Psoas muscle (tissue), 8 donors: ENCODE measurements at regions of chr14 and their contacts with region 1.

Region 1: DNA sequence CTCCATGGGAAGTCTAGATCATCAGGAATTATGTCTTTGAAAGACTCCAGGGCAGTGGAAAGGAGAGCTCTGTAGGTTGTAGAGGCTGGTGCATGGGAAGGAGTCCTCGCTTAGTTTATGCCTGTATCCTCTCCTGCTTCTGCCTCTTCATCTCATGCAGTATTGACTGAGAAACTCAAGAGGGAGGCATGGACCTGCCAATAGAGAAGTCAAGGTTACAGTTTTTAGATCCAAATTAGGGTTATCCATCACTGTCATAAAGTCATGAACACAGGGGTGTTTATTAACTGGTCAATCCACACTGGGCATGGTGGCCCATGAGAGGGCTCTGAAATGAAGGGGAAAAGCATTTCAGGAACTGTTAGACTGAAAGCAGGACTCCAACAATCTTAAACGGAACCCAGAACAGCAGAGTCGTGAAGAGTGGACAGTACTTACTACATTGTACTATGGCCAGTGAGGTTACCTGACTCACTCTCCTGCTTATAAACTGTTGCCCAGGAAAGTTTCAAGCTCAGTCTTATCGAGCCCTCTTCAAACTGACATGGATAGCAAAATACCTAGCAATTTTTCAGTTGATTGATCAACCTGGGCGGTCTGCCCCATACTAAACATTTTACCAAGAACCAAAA is 30.1 kb upstream of the DHRS7 start:
- DNase-seq: no peak
- ATAC-seq: peak; percentile 75 to 89 (median 84)
- H3K4me3 ChIP-seq: no peak overlapping the region
- H3K27ac ChIP-seq: no peak overlapping the region
- H3K4me1 ChIP-seq: no peaks in the 10 kb centered on the region
- H3K27me3 ChIP-seq: no peaks in the 10 kb centered on the region
- CTCF ChIP-seq: peak; percentile 39

Region 2: GRCh38 chr14:60327447-60328331 is 132.4 kb after region 1 on chr14:
- intact Hi-C with region 1: loop called in 1 of 2 experiments (anchors 10 kb)
- DNase-seq: peak; percentile 50 to 85
- ATAC-seq: peak; percentile 90 to 93 (median 92)
- H3K4me3 ChIP-seq: peak overlapping the region; percentile 53
- H3K27ac ChIP-seq: peak overlapping the region; percentile 64
- H3K4me1 ChIP-seq: peaks cover 3% of the 10 kb centered on the region
- H3K27me3 ChIP-seq: no peaks in the 10 kb centered on the region
- CTCF ChIP-seq: peak; percentile 21

Region 3: DNA sequence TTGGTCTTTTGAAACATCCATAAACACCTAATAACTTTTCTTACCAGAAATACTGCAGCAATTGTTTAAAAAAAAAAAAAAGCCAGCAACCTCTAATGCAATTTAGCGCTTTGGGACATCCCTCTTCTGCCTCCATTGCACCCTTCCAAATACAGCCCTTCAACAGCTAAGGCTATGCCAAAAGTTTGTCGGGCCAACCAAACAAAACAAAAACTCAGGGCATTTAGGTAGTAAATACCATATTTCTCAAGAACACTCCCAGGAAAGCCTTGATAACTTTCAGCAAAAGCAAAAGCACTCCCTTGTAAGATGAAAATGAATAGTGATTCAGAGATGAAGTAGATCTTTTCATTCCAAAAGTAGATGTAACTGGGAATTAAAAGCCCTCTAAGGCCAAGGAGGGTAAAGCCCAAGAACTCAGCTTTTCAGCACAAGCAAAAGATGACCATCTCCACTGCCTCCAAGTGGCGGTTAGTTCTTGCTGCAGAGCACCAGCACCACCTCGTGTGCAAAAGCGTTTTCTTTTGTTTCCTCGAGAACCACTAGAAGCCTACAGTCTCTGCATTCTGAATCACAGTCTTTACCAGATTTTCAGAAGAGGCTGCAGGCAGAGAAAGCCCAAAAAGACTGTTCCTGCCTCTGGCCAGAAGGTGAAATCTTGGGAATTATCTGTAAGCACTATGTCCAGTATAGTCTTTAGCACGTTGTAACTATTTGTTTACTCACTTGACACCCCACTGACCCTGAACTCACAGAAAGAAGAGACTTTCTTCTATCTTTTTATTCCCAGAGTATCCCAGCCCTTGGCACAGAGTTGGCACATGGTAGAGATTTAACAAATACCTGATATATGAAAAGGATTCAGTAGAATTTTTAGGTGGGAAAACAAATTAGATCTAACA is 366.8 kb after region 1 on chr14:
- intact Hi-C with region 1: loop called (anchors 10 kb)
- DNase-seq: peak; percentile 31 to 68
- ATAC-seq: peak; percentile 52 to 89 (median 78)
- H3K4me3 ChIP-seq: no peak overlapping the region
- H3K27ac ChIP-seq: no peak overlapping the region
- H3K4me1 ChIP-seq: no peaks in the 10 kb centered on the region
- H3K27me3 ChIP-seq: no peaks in the 10 kb centered on the region
- CTCF ChIP-seq: peak; percentile 60